Activated CD8-positive, alpha-beta T cell treated with anti-CD3 and anti-CD28 coated beads for 36 hours (primary cell): ENCODE measurements at regions of chr1 and their contacts with region 1.

Region 1: GRCh38 chr1:17606826-17607440 is 67.4 kb downstream of the ARHGEF10L start:
- DNase-seq: peak; percentile 73
- ATAC-seq: no peak
- H3K4me3 Mint-ChIP-seq: no peak overlapping the region
- H3K27ac Mint-ChIP-seq: no peak overlapping the region
- H3K4me1 Mint-ChIP-seq: no peaks in the 10 kb centered on the region
- H3K27me3 Mint-ChIP-seq: peaks cover 3% of the 10 kb centered on the region
- CTCF ChIP-seq: peak; percentile 85

Region 2: DNA sequence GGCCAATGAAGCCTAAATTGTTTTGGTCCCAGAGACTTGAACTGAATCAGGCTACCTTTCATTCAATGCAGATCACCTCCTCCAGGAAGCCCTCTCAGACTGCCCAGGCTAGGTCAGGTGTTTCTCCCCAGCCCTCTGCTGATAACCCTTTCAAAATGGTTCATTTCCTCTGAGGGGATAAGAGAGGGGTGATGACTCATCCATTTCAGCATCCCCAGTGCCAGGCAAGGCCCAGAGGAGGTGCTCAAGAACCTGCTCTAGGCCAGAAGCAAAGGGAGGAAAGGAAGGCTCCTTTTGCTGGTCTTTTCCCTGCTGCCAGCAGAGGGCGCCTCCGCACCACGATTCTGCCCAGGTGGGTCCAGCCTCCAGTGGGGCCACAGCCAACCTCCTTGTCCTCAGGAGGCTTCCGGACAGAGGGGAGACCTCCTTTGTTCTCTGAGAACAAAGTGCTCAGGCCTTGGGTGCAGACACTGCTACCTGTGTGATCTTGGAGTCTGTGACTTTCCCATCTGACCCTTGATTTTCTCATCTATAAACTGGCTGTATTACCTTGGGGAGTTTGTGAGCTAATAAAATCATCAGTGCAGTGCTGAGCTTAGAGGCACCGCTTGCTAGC is 112.7 kb before region 1 on chr1:
- CTCF ChIA-PET with region 1: interaction called, 26 read pairs
- POLR2A ChIA-PET with region 1: no interaction called
- intact Hi-C with region 1: loop called (anchors 2 kb)
- DNase-seq: peak; percentile 83
- ATAC-seq: peak; percentile 99
- H3K4me3 Mint-ChIP-seq: no peak overlapping the region
- H3K27ac Mint-ChIP-seq: no peak overlapping the region
- H3K4me1 Mint-ChIP-seq: peaks cover 3% of the 10 kb centered on the region
- H3K27me3 Mint-ChIP-seq: peaks cover 3% of the 10 kb centered on the region
- CTCF ChIP-seq: peak; percentile 87

Region 3: DNA sequence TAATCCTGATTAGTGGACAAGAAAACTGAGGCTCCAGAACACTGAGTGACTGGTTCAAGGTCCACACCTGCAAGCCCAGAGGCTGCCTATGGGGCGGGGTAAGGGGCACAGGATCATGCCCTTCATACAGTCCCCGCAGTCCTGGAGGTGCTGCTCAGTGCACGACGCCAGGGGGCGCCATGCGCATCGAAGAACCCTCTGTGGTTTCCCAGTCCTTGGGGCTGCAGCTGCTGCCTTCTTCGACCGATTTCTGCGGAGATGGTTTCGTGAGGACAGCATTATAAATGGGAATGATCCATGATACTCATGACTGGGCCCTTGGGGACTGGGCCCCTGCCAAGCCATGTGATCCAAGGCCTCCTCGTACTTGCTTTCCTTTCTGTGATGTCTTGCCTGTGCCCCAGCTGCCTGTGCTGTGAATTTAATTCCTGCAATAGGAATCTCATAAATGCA is 104.6 kb before region 1 on chr1:
- CTCF ChIA-PET with region 1: interaction called, 35 read pairs
- POLR2A ChIA-PET with region 1: no interaction called
- intact Hi-C with region 1: no loop called
- DNase-seq: peak; percentile 78
- ATAC-seq: peak; percentile 80
- H3K4me3 Mint-ChIP-seq: no peak overlapping the region
- H3K27ac Mint-ChIP-seq: no peak overlapping the region
- H3K4me1 Mint-ChIP-seq: no peaks in the 10 kb centered on the region
- H3K27me3 Mint-ChIP-seq: peaks cover 9% of the 10 kb centered on the region
- CTCF ChIP-seq: peak; percentile 84

Region 4: GRCh38 chr1:17511188-17511587 is 95.7 kb before region 1 on chr1:
- CTCF ChIA-PET with region 1: interaction called, 10 read pairs
- POLR2A ChIA-PET with region 1: no interaction called
- intact Hi-C with region 1: no loop called
- DNase-seq: no peak
- ATAC-seq: no peak
- H3K4me3 Mint-ChIP-seq: no peak overlapping the region
- H3K27ac Mint-ChIP-seq: no peak overlapping the region
- H3K4me1 Mint-ChIP-seq: no peaks in the 10 kb centered on the region
- H3K27me3 Mint-ChIP-seq: peaks cover 2% of the 10 kb centered on the region
- CTCF ChIP-seq: no peak

Region 5: GRCh38 chr1:17617787-17618557 is 11.0 kb after region 1 on chr1:
- CTCF ChIA-PET with region 1: interaction called, 12 read pairs
- POLR2A ChIA-PET with region 1: no interaction called
- intact Hi-C with region 1: no loop called
- DNase-seq: no peak
- ATAC-seq: no peak
- H3K4me3 Mint-ChIP-seq: no peak overlapping the region
- H3K27ac Mint-ChIP-seq: no peak overlapping the region
- H3K4me1 Mint-ChIP-seq: no peaks in the 10 kb centered on the region
- H3K27me3 Mint-ChIP-seq: peaks cover 6% of the 10 kb centered on the region
- CTCF ChIP-seq: no peak

Region 6: GRCh38 chr1:17780916-17781315 is 174.0 kb after region 1 on chr1:
- CTCF ChIA-PET with region 1: no interaction called
- POLR2A ChIA-PET with region 1: no interaction called
- intact Hi-C with region 1: no loop called
- DNase-seq: no peak
- ATAC-seq: no peak
- H3K4me3 Mint-ChIP-seq: no peak overlapping the region
- H3K27ac Mint-ChIP-seq: no peak overlapping the region
- H3K4me1 Mint-ChIP-seq: no peaks in the 10 kb centered on the region
- H3K27me3 Mint-ChIP-seq: no peaks in the 10 kb centered on the region
- CTCF ChIP-seq: no peak